HepG2 (cell line): ENCODE measurements at regions of chr1 and their contacts with region 1.

Region 1: DNA sequence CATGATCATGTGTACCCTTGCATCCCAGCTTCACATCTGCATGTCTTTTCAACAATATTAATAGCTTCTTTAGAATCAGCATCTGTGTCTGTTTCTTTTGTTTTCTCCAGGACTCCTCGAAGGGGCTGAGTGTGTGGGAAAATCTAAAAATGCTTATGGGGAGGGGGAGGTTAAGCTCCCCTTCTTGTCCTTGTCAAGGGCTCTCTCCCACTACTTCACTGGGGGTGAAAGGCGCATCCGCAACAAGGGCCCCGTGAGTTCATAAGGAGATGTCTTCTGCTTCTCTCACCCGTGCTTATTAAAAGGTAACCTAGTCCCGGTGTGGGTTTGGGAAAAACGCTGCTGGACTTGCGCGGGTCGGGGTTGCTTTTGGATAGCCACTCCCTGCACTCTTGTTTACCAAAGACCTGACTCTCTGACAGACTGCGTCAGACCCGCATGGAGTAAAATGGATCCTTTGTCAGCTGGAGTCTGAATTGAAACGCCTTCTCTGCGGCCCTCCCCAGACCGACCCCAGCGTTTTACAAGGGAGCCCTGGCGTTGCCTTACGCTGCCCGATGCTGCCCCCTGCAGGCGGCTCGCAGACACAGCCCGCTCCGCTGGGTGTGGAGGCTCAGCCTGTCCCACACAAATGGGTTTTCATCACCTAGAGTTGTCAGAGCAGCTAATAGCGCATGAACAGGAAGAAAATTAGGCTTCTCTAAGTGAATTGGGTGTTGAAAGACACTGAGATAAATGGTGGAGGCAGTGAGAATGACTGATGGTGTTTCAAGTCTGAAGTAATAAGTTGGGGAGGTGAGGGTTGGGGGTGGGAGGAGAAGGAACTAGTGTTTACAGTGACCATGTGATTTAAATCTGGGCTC is 53.8 kb downstream of the IER5 start:
- DNase-seq: peak; percentile 86
- ATAC-seq: peak; percentile 97
- H3K4me3 ChIP-seq: peak overlapping the region in 1 of 3 experiments; percentile 57; a peak in 2 of 6 replicates
- H3K27ac ChIP-seq: no peak overlapping the region
- H3K4me1 ChIP-seq: peaks cover 35% of the 10 kb centered on the region
- H3K27me3 ChIP-seq: peaks cover 0 to 9% of the 10 kb centered on the region in 2 experiments; a peak in 1 of 5 replicates
- CTCF ChIP-seq: peak; percentile 98
- EP300 ChIP-seq: no peak
- POLR2A ChIP-seq: no peak
- RAD21 ChIP-seq: peak; percentile 99

Region 2: GRCh38 chr1:180502360-180503273 is 639.7 kb before region 1 on chr1 and contains the start of gene ACBD6:
- CTCF ChIA-PET with region 1: no interaction called
- POLR2A ChIA-PET with region 1: no interaction called
- in situ Hi-C with region 1: loop called (anchors 25 kb)
- intact Hi-C with region 1: no loop called
- DNase-seq: peak; percentile 71
- ATAC-seq: peak; percentile 93
- H3K4me3 ChIP-seq: peak within 1 kb of the TSS; percentile 73 to 90 (median 73)
- H3K27ac ChIP-seq: peak within 1 kb of the TSS; percentile 93
- H3K4me1 ChIP-seq: peaks cover 47% of the 10 kb centered on the region
- H3K27me3 ChIP-seq: no peaks in the 10 kb centered on the region; a peak in 1 of 5 replicates
- CTCF ChIP-seq: no peak; the same call in 1 of the 2 replicates
- EP300 ChIP-seq: 0 out of 4 replicates have a peak, but pooled peaks of 1 of the 2 experiments have one; percentile 7
- POLR2A ChIP-seq: peak; percentile 73 to 83
- RAD21 ChIP-seq: peak; percentile 29; the same call in 1 of the 2 replicates
- total RNA-seq, gene ACBD6: 40.3 and 47.2 TPM in 2 replicates

Region 3: GRCh38 chr1:180881806-180882509 is 260.4 kb before region 1 on chr1:
- CTCF ChIA-PET with region 1: interaction called, 15 read pairs
- POLR2A ChIA-PET with region 1: no interaction called
- in situ Hi-C with region 1: loop called (anchors 10 kb)
- intact Hi-C with region 1: loop called (anchors 1 kb)
- DNase-seq: peak; percentile 25
- ATAC-seq: peak; percentile 54; the same call in 2 of the 3 replicates
- H3K4me3 ChIP-seq: no peak overlapping the region
- H3K27ac ChIP-seq: no peak overlapping the region
- H3K4me1 ChIP-seq: no peaks in the 10 kb centered on the region
- H3K27me3 ChIP-seq: no peaks in the 10 kb centered on the region; a peak in 1 of 5 replicates
- CTCF ChIP-seq: peak; percentile 71
- EP300 ChIP-seq: no peak
- POLR2A ChIP-seq: no peak
- RAD21 ChIP-seq: peak; percentile 42; the same call in 1 of the 2 replicates

Region 4: DNA sequence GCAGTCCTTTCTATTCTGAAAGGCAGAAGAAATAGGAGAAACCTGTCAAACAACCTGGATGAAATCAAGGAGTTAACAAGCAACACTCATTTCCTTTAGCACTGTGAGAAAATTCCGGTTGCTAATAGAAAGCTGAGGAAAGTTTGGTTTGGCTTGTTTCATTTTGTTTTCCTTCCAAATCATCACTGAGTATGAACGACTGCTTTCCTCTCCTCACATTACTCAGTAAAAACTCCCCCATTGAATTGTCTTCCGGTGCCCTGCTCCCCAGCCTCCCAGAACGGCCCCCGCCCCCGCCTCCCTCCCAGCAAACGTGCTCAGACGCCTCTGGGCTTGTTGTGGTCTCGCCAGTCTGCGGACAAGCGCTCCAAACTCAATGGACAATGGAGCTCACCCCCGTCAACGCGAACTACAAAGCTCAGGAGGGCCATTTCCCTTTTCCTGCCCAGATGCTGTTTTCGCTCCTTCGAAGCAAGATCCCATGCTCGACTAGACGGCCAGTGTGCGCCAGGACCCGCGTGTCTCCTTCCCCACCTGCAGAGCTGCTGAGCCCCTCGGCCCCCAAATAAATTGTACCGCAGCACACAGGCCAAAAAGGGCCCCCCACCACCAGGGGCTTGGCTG is 120.4 kb before region 1 on chr1:
- CTCF ChIA-PET with region 1: no interaction called
- POLR2A ChIA-PET with region 1: interaction called, 3 read pairs
- in situ Hi-C with region 1: no loop called
- intact Hi-C with region 1: loop called (anchors 5 kb)
- DNase-seq: peak; percentile 47
- ATAC-seq: peak; percentile 66
- H3K4me3 ChIP-seq: peak overlapping the region; percentile 90 to 94 (median 91)
- H3K27ac ChIP-seq: peak overlapping the region; percentile 77
- H3K4me1 ChIP-seq: peaks cover 43% of the 10 kb centered on the region
- H3K27me3 ChIP-seq: no peaks in the 10 kb centered on the region; a peak in 1 of 5 replicates
- CTCF ChIP-seq: 0 out of 2 replicates have a peak, but pooled peaks have one; percentile 6
- EP300 ChIP-seq: no peak
- POLR2A ChIP-seq: peak in 1 of 2 experiments; percentile 43; a peak in 1 of 4 replicates
- RAD21 ChIP-seq: no peak

Region 5: GRCh38 chr1:181033799-181034451 is 108.4 kb before region 1 on chr1 and contains the start of gene MR1:
- CTCF ChIA-PET with region 1: interaction called, 25 read pairs
- POLR2A ChIA-PET with region 1: interaction called, 10 read pairs
- in situ Hi-C with region 1: no loop called
- intact Hi-C with region 1: loop called (anchors 1 kb)
- DNase-seq: peak; percentile 78
- ATAC-seq: peak; percentile 90
- H3K4me3 ChIP-seq: peak within 1 kb of the TSS; percentile 59 to 81 (median 66)
- H3K27ac ChIP-seq: peak within 1 kb of the TSS; percentile 27
- H3K4me1 ChIP-seq: peaks cover 40% of the 10 kb centered on the region
- H3K27me3 ChIP-seq: no peaks in the 10 kb centered on the region; a peak in 1 of 5 replicates
- CTCF ChIP-seq: no peak
- EP300 ChIP-seq: no peak
- POLR2A ChIP-seq: no peak
- RAD21 ChIP-seq: no peak
- total RNA-seq, gene MR1: 6.6 and 10.4 TPM in 2 replicates

Region 6: GRCh38 chr1:181044449-181044966 is 97.8 kb before region 1 on chr1:
- CTCF ChIA-PET with region 1: interaction called, 25 read pairs
- POLR2A ChIA-PET with region 1: interaction called, 6 read pairs
- in situ Hi-C with region 1: loop called (anchors 5 kb)
- intact Hi-C with region 1: no loop called
- DNase-seq: peak; percentile 82
- ATAC-seq: peak; percentile 96
- H3K4me3 ChIP-seq: peak overlapping the region in 1 of 3 experiments; percentile 40; a peak in 2 of 6 replicates
- H3K27ac ChIP-seq: peak overlapping the region; percentile 57
- H3K4me1 ChIP-seq: peaks cover 51% of the 10 kb centered on the region
- H3K27me3 ChIP-seq: no peaks in the 10 kb centered on the region
- CTCF ChIP-seq: no peak
- EP300 ChIP-seq: peak in 1 of 2 experiments; percentile 67; a peak in 3 of 4 replicates
- POLR2A ChIP-seq: 0 out of 4 replicates have a peak, but pooled peaks of 1 of the 2 experiments have one; percentile 22
- RAD21 ChIP-seq: no peak

Region 7: GRCh38 chr1:181128592-181129497 is 13.5 kb before region 1 on chr1:
- CTCF ChIA-PET with region 1: no interaction called
- POLR2A ChIA-PET with region 1: interaction called, 11 read pairs
- in situ Hi-C with region 1: no loop called
- intact Hi-C with region 1: no loop called
- DNase-seq: no peak
- ATAC-seq: no peak
- H3K4me3 ChIP-seq: no peak overlapping the region
- H3K27ac ChIP-seq: no peak overlapping the region
- H3K4me1 ChIP-seq: peaks cover 58% of the 10 kb centered on the region
- H3K27me3 ChIP-seq: peaks cover 1 to 4% of the 10 kb centered on the region in 2 experiments; a peak in 1 of 5 replicates
- CTCF ChIP-seq: no peak
- EP300 ChIP-seq: no peak
- POLR2A ChIP-seq: no peak
- RAD21 ChIP-seq: no peak